Right ventricle myocardium inferior (tissue), 1 donor: ENCODE measurements at regions of chr15 and their contacts with region 1.

Region 1: GRCh38 chr15:68679961-68680371 is 101.2 kb downstream of the CORO2B start:
- DNase-seq: no peak
- ATAC-seq: no peak

Region 2: DNA sequence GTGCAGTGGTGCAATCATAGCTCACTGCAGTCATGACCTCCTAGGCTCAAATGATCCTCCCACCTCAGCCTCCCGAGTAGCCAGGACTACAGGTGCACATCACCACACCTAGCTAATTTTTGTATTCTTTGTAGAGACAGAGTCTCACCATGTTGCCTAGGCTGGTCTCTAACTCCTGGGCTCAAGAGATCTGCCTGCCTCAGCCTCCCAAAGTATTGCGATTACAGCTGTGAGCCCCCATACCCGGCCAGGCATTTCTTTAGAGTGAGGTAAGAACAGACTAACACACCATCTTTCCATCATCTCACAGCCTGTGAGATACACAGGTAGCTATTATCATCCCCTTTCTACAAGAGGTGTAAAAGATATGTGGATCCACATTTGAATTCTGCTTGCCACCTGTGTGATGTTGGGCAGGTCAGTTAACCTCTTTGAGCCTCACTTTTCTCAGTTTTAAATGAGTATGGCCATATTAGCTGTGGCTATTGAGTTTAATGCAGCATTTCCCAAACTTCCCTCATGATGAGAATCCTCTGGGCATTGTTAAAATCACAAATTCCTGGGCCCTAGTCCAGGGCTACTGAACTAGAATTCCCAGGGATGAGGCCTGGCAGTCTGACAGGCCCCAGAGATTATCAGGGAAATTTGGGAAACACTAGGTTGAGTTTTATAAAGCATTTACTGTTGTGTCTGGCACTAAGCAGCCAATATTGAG is 94.7 kb after region 1 on chr15:
- intact Hi-C with region 1: loop called (anchors 5 kb)
- DNase-seq: no peak
- ATAC-seq: peak; percentile 30